PC-3 (cell line): ENCODE measurements at regions of chr21 and their contacts with region 1.

Region 1: DNA sequence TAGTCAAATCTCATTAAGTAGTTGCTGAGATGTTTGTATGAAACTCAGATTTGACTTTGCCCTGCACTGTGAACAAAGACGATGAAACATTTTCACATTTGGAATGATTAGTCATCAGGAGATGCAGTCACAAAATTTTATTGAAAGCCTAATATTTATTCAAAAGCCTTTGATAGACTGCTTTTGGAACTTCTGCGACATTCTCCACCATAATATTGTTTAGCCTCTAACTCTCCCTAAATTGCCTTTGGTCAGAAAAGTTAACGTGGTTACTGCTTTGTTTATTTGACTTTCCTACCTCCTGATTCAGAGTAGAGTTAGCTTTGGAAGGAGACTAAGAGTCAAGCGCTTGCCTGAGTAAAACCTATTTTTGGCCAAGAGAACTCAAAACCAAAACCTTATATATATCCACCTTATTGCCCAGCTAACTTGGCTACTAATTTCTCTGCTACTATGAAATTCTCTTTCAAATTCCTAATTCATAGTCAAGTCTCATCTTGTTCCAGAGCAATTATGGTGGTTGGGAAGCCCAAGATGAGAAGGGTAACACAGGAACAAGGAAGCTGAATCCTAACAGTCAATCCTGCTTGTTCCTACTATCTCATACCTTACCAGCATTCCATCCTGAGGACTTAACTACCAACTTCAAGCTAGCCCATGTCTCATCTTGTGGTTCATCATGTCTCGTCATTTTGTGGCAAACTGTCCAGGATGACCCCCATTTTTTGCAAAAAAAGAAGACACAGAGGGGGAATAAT is 429.6 kb downstream of the USP25 start:
- DNase-seq: peak; percentile 71
- ATAC-seq: peak; percentile 94
- H3K4me3 ChIP-seq: peak overlapping the region; percentile 24; the same call in 1 of the 2 replicates
- H3K27ac ChIP-seq: peak overlapping the region; percentile 81
- H3K4me1 ChIP-seq: peaks cover 19% of the 10 kb centered on the region
- H3K27me3 ChIP-seq: no peaks in the 10 kb centered on the region
- CTCF ChIP-seq: no peak

Region 2: GRCh38 chr21:16046625-16047340 is 112.6 kb before region 1 on chr21:
- CTCF ChIA-PET with region 1: interaction called, 3 read pairs
- POLR2A ChIA-PET with region 1: no interaction called
- intact Hi-C with region 1: loop called (anchors 1 kb)
- DNase-seq: peak; percentile 91
- ATAC-seq: peak; percentile 98
- H3K4me3 ChIP-seq: peak overlapping the region; percentile 36; the same call in 1 of the 2 replicates
- H3K27ac ChIP-seq: peak overlapping the region; percentile 76
- H3K4me1 ChIP-seq: peaks cover 17% of the 10 kb centered on the region
- H3K27me3 ChIP-seq: no peaks in the 10 kb centered on the region
- CTCF ChIP-seq: no peak